CD8-positive, alpha-beta T cell (primary cell): ENCODE measurements at regions of chr10 and their contacts with region 1.

Region 1: GRCh38 chr10:6348096-6348874 is 145.6 kb downstream of the PFKFB3 start:
- DNase-seq: peak; percentile 59 to 96 (median 81)
- ATAC-seq: peak; percentile 89
- H3K4me3 ChIP-seq: peak overlapping the region; percentile 30 to 39
- H3K4me3 Mint-ChIP-seq: peak overlapping the region; percentile 81
- H3K27ac ChIP-seq: peak overlapping the region; percentile 71 to 79
- H3K27ac Mint-ChIP-seq: peak overlapping the region; percentile 97
- H3K4me1 ChIP-seq: peaks cover 34% of the 10 kb centered on the region
- H3K4me1 Mint-ChIP-seq: peaks cover 61% of the 10 kb centered on the region
- H3K27me3 ChIP-seq: no peaks in the 10 kb centered on the region
- H3K27me3 Mint-ChIP-seq: no peaks in the 10 kb centered on the region
- CTCF ChIP-seq: no peak

Region 2: DNA sequence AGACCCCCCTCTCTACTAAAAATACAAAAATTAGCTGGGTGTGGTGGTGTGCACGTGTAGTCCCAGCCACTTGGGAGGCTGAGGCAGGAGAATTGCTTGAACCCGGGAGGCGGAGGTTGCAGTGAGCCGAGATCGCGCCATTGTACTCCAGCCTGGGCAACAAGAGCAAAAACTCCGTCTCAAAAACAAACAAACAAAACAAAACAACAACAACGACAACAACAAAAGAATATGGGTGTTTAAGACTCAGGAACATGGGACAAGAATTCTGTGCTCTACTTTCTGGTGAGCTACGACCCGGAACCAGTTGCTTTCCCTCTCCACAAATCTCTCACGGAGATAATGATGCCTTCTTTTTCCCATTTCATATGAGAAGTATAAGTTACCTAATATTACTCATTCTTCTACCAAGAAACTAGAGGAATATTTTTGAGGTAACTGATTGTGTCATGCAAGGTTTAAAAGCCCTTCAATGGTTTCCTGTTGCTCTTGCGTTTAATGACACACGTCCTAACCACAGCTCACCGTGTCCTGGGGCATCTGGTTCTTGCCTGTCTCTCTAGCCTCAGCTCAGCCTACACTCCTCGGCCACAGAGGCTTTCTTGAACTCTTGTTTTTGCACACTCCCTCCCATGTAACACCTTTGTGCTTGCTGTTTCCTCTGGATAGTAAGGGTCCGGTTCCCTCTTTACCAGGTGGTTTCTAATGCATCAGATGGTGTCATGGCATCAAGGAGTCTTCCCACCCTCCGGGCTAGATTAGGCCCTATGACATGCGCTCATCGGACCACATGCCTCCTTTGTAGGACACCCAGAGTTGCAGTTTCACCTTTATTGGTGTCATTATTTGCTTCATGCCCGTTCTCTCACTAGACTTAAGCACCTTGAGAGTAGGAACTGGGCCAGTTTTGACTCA is 78.1 kb before region 1 on chr10:
- CTCF ChIA-PET with region 1: no interaction called
- POLR2A ChIA-PET with region 1: interaction called, 21 read pairs
- intact Hi-C with region 1: loop called (anchors 1 kb)
- DNase-seq: peak; percentile 42 to 93 (median 67)
- ATAC-seq: peak; percentile 70
- H3K4me3 ChIP-seq: no peak overlapping the region
- H3K4me3 Mint-ChIP-seq: peak overlapping the region; percentile 30
- H3K27ac ChIP-seq: peak overlapping the region; percentile 26 to 70
- H3K27ac Mint-ChIP-seq: peak overlapping the region; percentile 92
- H3K4me1 ChIP-seq: peaks cover 34% of the 10 kb centered on the region
- H3K4me1 Mint-ChIP-seq: peaks cover 47% of the 10 kb centered on the region
- H3K27me3 ChIP-seq: no peaks in the 10 kb centered on the region
- H3K27me3 Mint-ChIP-seq: no peaks in the 10 kb centered on the region
- CTCF ChIP-seq: no peak

Region 3: GRCh38 chr10:6275022-6275997 is 73.0 kb before region 1 on chr10:
- CTCF ChIA-PET with region 1: no interaction called
- POLR2A ChIA-PET with region 1: interaction called, 21 read pairs
- intact Hi-C with region 1: loop called (anchors 1 kb)
- DNase-seq: peak; percentile 73 to 97 (median 84)
- ATAC-seq: peak; percentile 86
- H3K4me3 ChIP-seq: peak overlapping the region in 1 of 2 experiments; percentile 37
- H3K4me3 Mint-ChIP-seq: peak overlapping the region; percentile 61
- H3K27ac ChIP-seq: peak overlapping the region; percentile 39 to 86
- H3K27ac Mint-ChIP-seq: peak overlapping the region; percentile 92
- H3K4me1 ChIP-seq: peaks cover 31% of the 10 kb centered on the region
- H3K4me1 Mint-ChIP-seq: peaks cover 42% of the 10 kb centered on the region
- H3K27me3 ChIP-seq: no peaks in the 10 kb centered on the region
- H3K27me3 Mint-ChIP-seq: no peaks in the 10 kb centered on the region
- CTCF ChIP-seq: no peak

Region 4: GRCh38 chr10:6300106-6300783 is 48.0 kb before region 1 on chr10:
- CTCF ChIA-PET with region 1: interaction called, 10 read pairs
- POLR2A ChIA-PET with region 1: interaction called, 4 read pairs
- intact Hi-C with region 1: loop called (anchors 5 kb)
- DNase-seq: peak in 8 of 9 experiments; percentile 6 to 82 (median 47)
- ATAC-seq: peak; percentile 82
- H3K4me3 ChIP-seq: no peak overlapping the region
- H3K4me3 Mint-ChIP-seq: peak overlapping the region; percentile 54
- H3K27ac ChIP-seq: peak overlapping the region in 1 of 2 experiments; percentile 1
- H3K27ac Mint-ChIP-seq: peak overlapping the region; percentile 91
- H3K4me1 ChIP-seq: peaks cover 17% of the 10 kb centered on the region
- H3K4me1 Mint-ChIP-seq: peaks cover 26% of the 10 kb centered on the region
- H3K27me3 ChIP-seq: no peaks in the 10 kb centered on the region
- H3K27me3 Mint-ChIP-seq: no peaks in the 10 kb centered on the region
- CTCF ChIP-seq: no peak

Region 5: DNA sequence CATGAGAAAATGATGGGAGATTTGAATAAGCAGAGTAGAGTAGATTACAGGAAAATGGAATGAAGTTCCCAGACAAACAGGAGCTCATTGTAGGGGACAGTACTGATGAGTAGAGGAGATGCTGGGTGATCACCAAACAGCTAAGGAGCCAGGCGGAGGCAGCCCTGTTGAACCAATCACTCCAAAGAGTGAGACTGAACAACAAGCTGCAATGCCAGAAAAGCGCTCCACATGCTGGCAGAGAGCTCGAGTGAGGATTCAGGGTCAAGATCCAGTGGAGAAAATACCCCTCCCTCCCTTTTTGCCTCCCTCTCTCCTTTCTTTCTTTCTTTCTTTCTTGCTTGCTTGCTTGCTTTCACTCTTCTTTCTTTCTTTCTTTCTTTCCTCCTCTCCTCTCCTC is 12.3 kb before region 1 on chr10:
- CTCF ChIA-PET with region 1: interaction called, 3 read pairs
- POLR2A ChIA-PET with region 1: interaction called, 15 read pairs
- intact Hi-C with region 1: no loop called
- DNase-seq: no peak
- ATAC-seq: no peak
- H3K4me3 ChIP-seq: no peak overlapping the region
- H3K4me3 Mint-ChIP-seq: no peak overlapping the region
- H3K27ac ChIP-seq: no peak overlapping the region
- H3K27ac Mint-ChIP-seq: no peak overlapping the region
- H3K4me1 ChIP-seq: no peaks in the 10 kb centered on the region
- H3K4me1 Mint-ChIP-seq: peaks cover 4% of the 10 kb centered on the region
- H3K27me3 ChIP-seq: peaks cover 0 to 2% of the 10 kb centered on the region in 2 experiments
- H3K27me3 Mint-ChIP-seq: no peaks in the 10 kb centered on the region
- CTCF ChIP-seq: no peak

Region 6: DNA sequence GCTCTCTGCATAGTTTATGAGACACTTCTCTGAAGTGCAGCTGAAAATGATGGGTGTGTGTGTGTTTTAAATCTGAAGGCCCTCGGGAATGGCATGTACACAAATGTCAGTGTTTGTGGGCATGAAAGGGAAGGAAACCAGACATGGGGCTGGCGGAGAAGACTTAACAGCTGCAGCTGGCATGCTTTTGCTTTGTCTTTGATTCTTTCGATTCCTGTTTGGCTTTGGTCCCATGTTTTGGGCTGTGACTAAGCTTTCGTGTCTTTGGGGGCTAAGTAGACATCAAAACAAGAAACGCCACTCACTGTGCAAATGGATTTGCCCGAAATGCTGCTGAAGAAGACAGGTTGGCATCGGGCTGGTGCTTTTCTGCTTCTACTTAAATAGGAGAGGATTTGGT is 33.8 kb after region 1 on chr10:
- CTCF ChIA-PET with region 1: interaction called, 5 read pairs
- POLR2A ChIA-PET with region 1: interaction called, 24 read pairs
- intact Hi-C with region 1: loop called (anchors 1 kb)
- DNase-seq: peak in 8 of 9 experiments; percentile 20 to 71 (median 54)
- ATAC-seq: peak; percentile 89
- H3K4me3 ChIP-seq: peak overlapping the region in 1 of 2 experiments; percentile 12
- H3K4me3 Mint-ChIP-seq: peak overlapping the region; percentile 74
- H3K27ac ChIP-seq: no peak overlapping the region
- H3K27ac Mint-ChIP-seq: peak overlapping the region; percentile 73
- H3K4me1 ChIP-seq: peaks cover 15% of the 10 kb centered on the region
- H3K4me1 Mint-ChIP-seq: peaks cover 24% of the 10 kb centered on the region
- H3K27me3 ChIP-seq: no peaks in the 10 kb centered on the region
- H3K27me3 Mint-ChIP-seq: no peaks in the 10 kb centered on the region
- CTCF ChIP-seq: no peak

Region 7: DNA sequence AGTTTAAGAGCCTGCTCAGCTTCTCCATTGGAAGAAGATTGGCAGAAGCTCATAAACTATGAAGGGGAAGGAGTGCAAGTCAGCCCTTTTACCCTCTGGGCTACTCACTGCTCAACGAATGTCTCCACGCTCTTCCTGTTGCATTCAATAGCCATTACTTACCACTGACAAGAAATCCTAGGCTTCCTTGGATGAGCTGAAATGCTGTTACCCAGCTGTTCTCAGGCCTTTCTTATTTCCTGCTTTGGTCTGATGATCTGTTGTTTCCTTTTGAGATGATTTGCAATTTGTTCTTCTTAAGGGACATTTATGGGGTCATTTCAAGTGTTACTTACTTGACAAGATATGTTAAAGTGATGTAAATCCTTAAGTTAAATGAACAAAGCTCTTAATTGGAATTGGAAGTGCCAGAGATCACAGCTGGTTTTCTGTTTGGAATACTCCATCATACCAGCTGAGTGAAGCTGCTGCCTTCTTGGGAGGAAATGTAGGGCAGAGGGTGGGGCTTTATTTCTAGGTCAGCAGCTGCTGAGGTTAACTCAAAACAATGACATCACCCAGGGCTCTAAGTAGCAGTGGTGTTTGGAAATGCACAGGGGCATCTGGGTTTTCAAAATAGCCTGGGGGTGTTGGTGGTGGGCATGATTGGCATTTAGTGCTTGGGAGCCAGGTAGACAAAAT is 61.8 kb after region 1 on chr10:
- CTCF ChIA-PET with region 1: interaction called, 20 read pairs
- POLR2A ChIA-PET with region 1: interaction called, 18 read pairs
- intact Hi-C with region 1: no loop called
- DNase-seq: peak in 8 of 9 experiments; percentile 15 to 87 (median 56)
- ATAC-seq: peak; percentile 93
- H3K4me3 ChIP-seq: peak overlapping the region in 1 of 2 experiments; percentile 18
- H3K4me3 Mint-ChIP-seq: peak overlapping the region; percentile 43
- H3K27ac ChIP-seq: peak overlapping the region; percentile 42 to 89
- H3K27ac Mint-ChIP-seq: peak overlapping the region; percentile 95
- H3K4me1 ChIP-seq: peaks cover 17% of the 10 kb centered on the region
- H3K4me1 Mint-ChIP-seq: peaks cover 38% of the 10 kb centered on the region
- H3K27me3 ChIP-seq: no peaks in the 10 kb centered on the region
- H3K27me3 Mint-ChIP-seq: no peaks in the 10 kb centered on the region
- CTCF ChIP-seq: no peak